Heart left ventricle (tissue), 16 donors: ENCODE measurements at regions of chr17 and their contacts with region 1.

Region 1: GRCh38 chr17:58577642-58578091 is 63.2 kb upstream of the MTMR4 start:
- DNase-seq: peak in 4 of 5 donors; percentile 30 to 56 (median 40)
- ATAC-seq: peak in 2 of 4 donors; percentile 30 to 31
- H3K4me3 ChIP-seq: no peak overlapping the region
- H3K27ac ChIP-seq: no peak overlapping the region
- H3K4me1 ChIP-seq: peaks cover 0 to 12% (median 2%) of the 10 kb centered on the region in 12 donors
- H3K27me3 ChIP-seq: no peaks in the 10 kb centered on the region
- CTCF ChIP-seq: peak; percentile 43 to 72 (median 59)
- POLR2A ChIP-seq: no peak

Region 2: DNA sequence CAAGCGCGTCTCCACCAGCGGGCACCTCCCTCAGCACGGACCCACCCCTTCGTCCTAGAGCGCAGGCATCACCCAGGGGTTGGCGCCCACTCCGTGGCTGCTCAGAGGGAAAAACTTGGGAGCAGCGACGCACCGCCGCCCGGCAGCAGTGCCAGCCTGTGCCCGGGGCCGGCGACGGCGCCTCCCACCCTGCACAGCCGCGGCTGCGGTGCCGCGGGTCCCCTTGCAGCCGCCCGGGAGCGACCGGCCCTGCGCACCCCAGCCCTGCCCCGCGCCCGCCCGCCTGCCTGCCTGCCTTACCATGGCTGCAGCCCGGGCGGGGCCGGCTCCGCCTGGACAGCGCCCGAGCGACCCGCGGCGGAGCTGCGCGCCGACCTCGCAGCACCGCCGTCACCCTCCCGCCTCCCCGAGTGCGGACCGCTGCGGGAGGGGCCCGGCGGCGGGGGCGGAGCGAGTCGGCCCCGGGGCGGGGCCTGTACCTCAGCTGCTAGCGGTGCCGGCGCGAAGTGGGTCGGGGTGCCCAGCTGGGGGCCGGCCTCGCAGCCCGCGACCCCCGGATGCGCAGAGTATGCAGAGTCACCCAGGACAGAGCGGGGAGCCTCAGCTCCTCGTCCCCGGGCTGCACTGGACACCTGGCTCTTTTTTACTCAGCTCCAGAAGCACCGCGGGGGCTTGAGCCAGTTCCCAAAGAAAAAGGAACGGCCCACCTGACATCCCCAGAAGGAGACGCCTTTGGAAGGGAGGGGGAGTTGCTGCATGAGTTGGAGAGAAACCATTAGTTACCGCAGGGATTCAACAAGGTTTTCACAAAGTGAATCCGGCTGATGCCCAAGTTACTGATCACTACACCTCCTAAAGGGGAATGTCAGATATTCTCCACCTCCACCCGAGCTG is 45.8 kb before region 1 on chr17:
- intact Hi-C with region 1: loop called in 6 of 10 experiments (anchors 5 to 10 kb)
- DNase-seq: peak; percentile 68 to 84 (median 76)
- ATAC-seq: peak; percentile 33 to 88 (median 79)
- H3K4me3 ChIP-seq: peak overlapping the region; percentile 40 to 88 (median 64)
- H3K27ac ChIP-seq: peak overlapping the region; percentile 9 to 78 (median 68)
- H3K4me1 ChIP-seq: peaks cover 4 to 86% (median 45%) of the 10 kb centered on the region in 12 donors
- H3K27me3 ChIP-seq: peaks cover 0 to 5% (median 0%) of the 10 kb centered on the region in 9 donors
- CTCF ChIP-seq: no peak
- POLR2A ChIP-seq: peak in 1 of 2 donors; percentile 42

Region 3: DNA sequence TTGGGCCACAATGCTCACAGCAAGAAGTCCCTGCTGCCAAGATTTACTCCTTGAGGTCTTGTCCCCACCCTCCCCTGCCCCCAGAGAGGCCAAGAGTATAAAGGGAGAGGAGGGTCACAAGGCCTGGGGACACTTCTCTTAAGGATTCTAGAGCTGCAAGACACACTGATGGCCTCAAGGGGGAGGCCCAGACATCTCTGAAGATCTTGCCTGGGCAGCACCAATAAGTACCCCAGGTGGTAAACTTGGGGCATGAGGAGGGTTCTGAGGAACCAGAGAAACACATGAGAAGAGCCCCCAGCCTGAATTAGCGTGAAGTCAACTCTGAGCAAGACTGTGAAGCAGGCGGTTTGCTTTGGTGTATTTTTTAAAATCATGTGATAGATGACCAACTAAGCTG is 36.4 kb before region 1 on chr17:
- intact Hi-C with region 1: loop called in 3 of 10 experiments (anchors 5 kb)
- DNase-seq: no peak
- ATAC-seq: no peak
- H3K4me3 ChIP-seq: no peak overlapping the region
- H3K27ac ChIP-seq: no peak overlapping the region
- H3K4me1 ChIP-seq: peaks cover 7 to 40% (median 25%) of the 10 kb centered on the region in 12 donors
- H3K27me3 ChIP-seq: no peaks in the 10 kb centered on the region
- CTCF ChIP-seq: peak in 4 of 12 donors; percentile 5 to 26 (median 18)
- POLR2A ChIP-seq: no peak

Region 4: DNA sequence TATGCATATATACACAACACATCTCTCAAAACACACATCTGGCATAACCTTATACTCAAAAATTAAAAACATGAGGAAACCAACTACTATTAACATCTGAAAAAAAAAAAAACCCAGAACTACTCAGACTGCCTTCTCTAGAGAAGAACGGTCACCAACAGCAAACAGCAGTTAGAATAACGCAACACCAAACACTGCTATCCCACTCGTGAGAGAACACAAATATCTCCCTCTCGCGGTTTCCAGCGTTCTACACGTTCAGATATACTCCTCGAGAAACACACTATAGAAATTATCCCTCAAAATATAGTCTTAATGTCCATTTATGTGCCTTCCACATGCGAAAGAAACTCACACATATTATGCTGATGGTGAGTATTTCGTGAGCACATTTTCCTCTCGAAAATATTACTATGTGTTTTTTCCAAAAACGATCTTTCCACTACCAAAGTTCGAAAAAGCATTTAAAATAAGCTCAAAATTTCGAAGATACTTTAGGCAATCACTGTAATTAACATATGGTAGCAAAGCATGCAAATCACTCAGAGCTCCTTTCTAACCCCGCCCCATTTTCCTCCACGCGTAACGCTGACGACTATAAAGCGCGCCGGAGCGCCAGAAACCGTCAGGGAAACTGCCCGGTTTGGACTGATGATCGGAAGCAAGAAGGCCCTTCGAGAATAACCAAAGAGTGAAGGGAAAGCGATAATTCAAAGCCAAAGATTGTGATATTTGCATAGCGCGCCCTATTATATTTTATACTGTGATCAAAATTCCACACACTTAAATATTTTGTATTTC is 54.1 kb after region 1 on chr17:
- intact Hi-C with region 1: loop called in 1 of 10 experiments (anchors 2 kb)
- DNase-seq: peak; percentile 94 to 96 (median 95)
- ATAC-seq: peak; percentile 97 to 98 (median 97)
- H3K4me3 ChIP-seq: peak overlapping the region; percentile 2 to 61 (median 48)
- H3K27ac ChIP-seq: peak overlapping the region; percentile 49 to 93 (median 78)
- H3K4me1 ChIP-seq: peaks cover 0 to 24% (median 4%) of the 10 kb centered on the region in 12 donors
- H3K27me3 ChIP-seq: no peaks in the 10 kb centered on the region
- CTCF ChIP-seq: peak in 7 of 12 donors; percentile 6 to 43 (median 22)
- POLR2A ChIP-seq: peak in 1 of 2 donors; percentile 84

Region 5: GRCh38 chr17:59004338-59005111 is 426.9 kb after region 1 on chr17:
- intact Hi-C with region 1: loop called in 1 of 10 experiments (anchors 5 kb)
- DNase-seq: peak in 4 of 5 donors; percentile 39 to 48 (median 46)
- ATAC-seq: peak in 3 of 4 donors; percentile 70 to 76 (median 72)
- H3K4me3 ChIP-seq: no peak overlapping the region
- H3K27ac ChIP-seq: peak overlapping the region in 1 of 12 donors; percentile 6
- H3K4me1 ChIP-seq: peaks cover 0 to 31% (median 5%) of the 10 kb centered on the region in 12 donors
- H3K27me3 ChIP-seq: no peaks in the 10 kb centered on the region
- CTCF ChIP-seq: peak; percentile 90 to 98 (median 96)
- POLR2A ChIP-seq: no peak